Tibial artery (tissue), 4 donors: ENCODE measurements at regions of chr14 and their contacts with region 1.

Region 1: DNA sequence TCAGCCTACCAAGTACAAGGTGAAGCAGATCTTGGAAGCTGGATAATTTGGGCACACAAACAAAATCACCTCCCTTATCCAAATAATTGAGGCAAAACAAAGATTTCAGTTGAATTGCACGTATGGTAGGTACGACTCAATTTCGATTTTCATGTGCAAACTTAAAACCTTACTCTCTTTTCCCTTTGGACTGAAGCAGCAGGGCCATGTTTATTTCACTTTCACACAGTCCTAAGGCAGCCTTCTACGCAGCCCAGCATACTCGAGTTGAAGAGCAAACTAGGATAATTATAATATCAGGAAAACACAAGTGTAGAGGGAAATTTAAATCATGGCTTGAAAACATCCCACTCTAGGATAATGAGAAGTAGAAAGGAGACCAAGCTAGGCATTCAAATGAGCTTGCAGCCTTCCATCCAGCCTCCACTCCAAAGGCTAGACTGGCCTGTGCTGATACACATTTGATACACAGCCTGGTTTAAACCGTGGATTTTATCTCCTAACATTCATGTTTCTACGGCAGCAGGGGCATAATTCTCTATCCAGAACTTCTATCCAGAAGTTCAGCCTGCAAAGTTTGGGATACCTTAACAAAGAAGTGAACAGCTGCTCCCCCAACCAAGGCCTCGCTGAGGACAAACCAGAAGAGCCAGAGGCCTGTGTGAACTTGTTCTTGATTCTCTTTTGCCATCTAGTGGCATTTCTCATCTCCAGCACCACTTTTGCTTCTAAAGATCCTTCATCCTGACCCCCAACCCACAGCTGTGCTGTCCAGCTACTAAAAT is 2.4 kb upstream of the RNASE7 start:
- DNase-seq: no peak
- H3K4me3 ChIP-seq: no peak overlapping the region
- H3K27ac ChIP-seq: peak overlapping the region; percentile 69 to 75
- H3K4me1 ChIP-seq: peaks cover 0 to 25% (median 19%) of the 10 kb centered on the region in 4 donors
- H3K27me3 ChIP-seq: peaks cover 0 to 8% of the 10 kb centered on the region in 2 donors
- CTCF ChIP-seq: peak; percentile 71 to 77

Region 2: GRCh38 chr14:21014761-21015190 is 25.0 kb before region 1 on chr14:
- intact Hi-C with region 1: loop called (anchors 2 kb)
- DNase-seq: peak; percentile 85 to 88
- H3K4me3 ChIP-seq: no peak overlapping the region
- H3K27ac ChIP-seq: no peak overlapping the region
- H3K4me1 ChIP-seq: peaks cover 0 to 6% (median 0%) of the 10 kb centered on the region in 4 donors
- H3K27me3 ChIP-seq: no peaks in the 10 kb centered on the region
- CTCF ChIP-seq: peak; percentile 93 to 97

Region 3: DNA sequence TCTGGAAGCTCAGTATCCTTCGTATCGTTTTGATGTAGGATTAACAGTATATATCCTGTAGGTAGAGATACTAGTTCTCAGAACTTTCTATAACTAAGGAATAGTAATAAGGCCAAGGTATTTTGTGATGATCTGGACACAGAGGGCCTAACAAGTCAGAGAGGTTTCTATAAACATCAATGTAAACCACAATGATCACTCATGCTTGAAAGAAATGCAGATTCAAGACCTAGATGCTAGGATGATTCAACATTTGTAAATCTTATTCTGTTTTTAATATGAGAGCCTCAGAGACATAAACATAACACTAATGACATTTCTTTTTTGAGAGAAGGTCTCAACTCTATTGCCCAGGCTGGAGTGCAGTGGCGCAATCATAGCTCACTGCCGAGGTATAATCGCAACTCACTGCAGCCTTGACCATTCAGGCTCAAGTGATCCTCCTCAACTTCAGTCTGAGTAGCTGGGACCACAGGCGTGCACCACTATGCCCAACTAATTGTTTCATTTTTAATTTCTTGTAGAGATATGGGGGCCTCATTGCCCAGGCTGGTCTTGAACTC is 327.9 kb after region 1 on chr14:
- intact Hi-C with region 1: no loop called
- DNase-seq: no peak
- H3K4me3 ChIP-seq: no peak overlapping the region
- H3K27ac ChIP-seq: no peak overlapping the region
- H3K4me1 ChIP-seq: no peaks in the 10 kb centered on the region
- H3K27me3 ChIP-seq: no peaks in the 10 kb centered on the region
- CTCF ChIP-seq: no peak